HEK293 (cell line): ENCODE measurements at regions of chr2 and their contacts with region 1.

Region 1: GRCh38 chr2:100291120-100291970 is 31.0 kb downstream of the LONRF2 start:
- H3K4me3 ChIP-seq: no peak overlapping the region
- H3K27ac ChIP-seq: peak overlapping the region; percentile 54
- H3K4me1 ChIP-seq: peaks cover 16% of the 10 kb centered on the region
- CTCF ChIP-seq: no peak

Region 2: GRCh38 chr2:100013892-100014677 is 277.3 kb before region 1 on chr2:
- CTCF ChIA-PET with region 1: no interaction called
- POLR2A ChIA-PET with region 1: no interaction called
- H3K4me3 ChIP-seq: no peak overlapping the region
- H3K27ac ChIP-seq: no peak overlapping the region; the same call in 1 of the 2 replicates
- H3K4me1 ChIP-seq: peaks cover 9% of the 10 kb centered on the region
- CTCF ChIP-seq: no peak; the same call in 1 of the 2 replicates

Region 3: GRCh38 chr2:100214265-100214971 is 76.9 kb before region 1 on chr2:
- CTCF ChIA-PET with region 1: no interaction called
- POLR2A ChIA-PET with region 1: no interaction called
- H3K4me3 ChIP-seq: no peak overlapping the region
- H3K27ac ChIP-seq: no peak overlapping the region
- H3K4me1 ChIP-seq: no peaks in the 10 kb centered on the region
- CTCF ChIP-seq: no peak

Region 4: DNA sequence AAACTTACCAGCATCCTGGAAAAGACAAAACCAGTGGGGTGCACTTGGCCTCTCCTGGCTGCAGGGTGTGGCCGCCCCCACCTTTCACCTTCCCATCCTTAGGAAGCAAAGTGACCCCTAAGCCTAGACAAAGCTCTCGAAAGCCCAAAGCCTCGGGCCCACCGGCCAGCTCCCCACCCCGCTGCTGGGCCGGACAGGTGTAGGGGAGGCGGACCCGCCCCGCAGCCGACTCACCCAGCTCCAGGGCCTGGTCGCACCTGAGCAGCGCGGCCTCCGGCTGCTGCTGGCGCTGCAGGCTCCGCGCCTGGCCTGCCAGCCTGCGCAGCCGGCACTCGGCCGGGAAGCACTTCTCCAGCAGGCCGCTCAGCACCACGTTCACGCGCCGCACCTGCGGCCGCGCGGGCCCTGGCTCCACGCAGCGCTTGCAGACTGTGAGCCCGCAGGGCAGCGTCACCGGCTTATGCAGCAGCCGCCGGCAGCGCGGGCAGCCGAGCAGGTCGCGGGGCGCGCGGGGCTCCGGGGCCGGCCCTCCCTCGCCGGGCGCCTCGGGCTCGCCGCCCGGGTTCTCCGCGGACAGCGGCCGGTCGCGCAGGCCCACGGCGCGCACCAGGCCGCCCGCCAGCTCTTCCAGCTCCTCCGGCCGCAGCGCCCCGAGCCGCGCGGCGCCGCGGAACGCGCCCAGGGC is 30.0 kb after region 1 on chr2:
- CTCF ChIA-PET with region 1: interaction called, 13 read pairs
- POLR2A ChIA-PET with region 1: interaction called, 12 read pairs
- H3K4me3 ChIP-seq: peak overlapping the region; percentile 64
- H3K27ac ChIP-seq: peak overlapping the region; percentile 89
- H3K4me1 ChIP-seq: peaks cover 3% of the 10 kb centered on the region; the same call in 1 of the 2 replicates
- CTCF ChIP-seq: peak; percentile 44; the same call in 1 of the 2 replicates